Activated CD8-positive, alpha-beta T cell treated with anti-CD3 and anti-CD28 coated beads for 36 hours (primary cell): ENCODE measurements at regions of chr1 and their contacts with region 1.

Region 1: DNA sequence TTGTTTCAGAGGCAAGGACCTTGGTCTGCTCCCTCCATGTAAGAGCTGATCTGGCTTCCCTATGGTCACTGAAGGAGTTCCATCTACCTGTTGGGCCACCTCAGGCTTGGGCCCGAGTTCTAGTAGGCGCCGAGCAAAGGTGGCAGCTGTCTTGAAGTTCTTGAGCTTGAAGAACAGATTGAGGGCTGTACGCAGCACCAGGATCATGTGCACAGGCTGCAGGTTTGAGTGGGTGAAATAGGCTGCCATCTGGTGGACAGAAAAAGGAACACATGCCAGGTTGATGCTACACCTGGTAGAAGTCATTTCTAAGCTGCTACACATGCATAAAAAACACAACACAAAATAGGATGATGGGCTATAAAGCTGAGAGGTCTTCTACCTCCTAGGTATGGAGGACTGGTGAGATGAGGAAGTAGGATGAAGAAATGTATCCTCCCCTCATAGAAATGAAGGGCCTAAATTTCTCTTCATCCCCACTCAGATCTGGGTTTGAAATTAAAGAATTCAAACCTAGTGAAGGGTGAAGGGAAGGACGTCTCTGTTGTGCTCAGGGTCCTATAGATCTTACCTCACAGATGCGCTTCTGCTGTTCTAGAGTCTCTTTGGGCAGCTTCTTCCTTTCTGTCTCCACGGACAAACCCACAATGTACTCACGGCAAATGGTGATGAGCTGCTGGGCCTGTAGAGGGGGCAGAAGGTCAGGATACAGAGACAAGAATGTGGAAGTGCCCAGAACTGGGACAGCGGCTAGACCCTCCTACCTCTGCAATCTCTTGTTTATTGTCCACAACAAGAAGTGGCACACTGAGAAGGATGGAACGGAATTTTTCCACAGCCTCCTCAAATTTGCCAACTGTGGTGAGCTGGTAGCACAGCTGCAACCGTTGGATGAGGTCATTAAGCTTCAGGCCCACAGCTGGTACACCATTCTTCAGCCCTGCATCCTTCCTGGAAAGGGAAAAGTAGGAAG is 6.6 kb upstream of the PEX19 start:
- DNase-seq: peak; percentile 75
- ATAC-seq: peak; percentile 97
- H3K4me3 Mint-ChIP-seq: no peak overlapping the region
- H3K27ac Mint-ChIP-seq: no peak overlapping the region
- H3K4me1 Mint-ChIP-seq: peaks cover 4% of the 10 kb centered on the region
- H3K27me3 Mint-ChIP-seq: no peaks in the 10 kb centered on the region
- CTCF ChIP-seq: peak; percentile 72

Region 2: GRCh38 chr1:160058087-160058486 is 233.4 kb before region 1 on chr1:
- CTCF ChIA-PET with region 1: no interaction called
- POLR2A ChIA-PET with region 1: no interaction called
- intact Hi-C with region 1: no loop called
- DNase-seq: no peak
- ATAC-seq: no peak
- H3K4me3 Mint-ChIP-seq: no peak overlapping the region
- H3K27ac Mint-ChIP-seq: no peak overlapping the region
- H3K4me1 Mint-ChIP-seq: no peaks in the 10 kb centered on the region
- H3K27me3 Mint-ChIP-seq: peaks cover 15% of the 10 kb centered on the region
- CTCF ChIP-seq: no peak

Region 3: GRCh38 chr1:160085686-160086455 is 205.7 kb before region 1 on chr1:
- CTCF ChIA-PET with region 1: interaction called, 21 read pairs
- POLR2A ChIA-PET with region 1: no interaction called
- intact Hi-C with region 1: no loop called
- DNase-seq: peak; percentile 92
- ATAC-seq: peak; percentile 76
- H3K4me3 Mint-ChIP-seq: no peak overlapping the region
- H3K27ac Mint-ChIP-seq: no peak overlapping the region
- H3K4me1 Mint-ChIP-seq: peaks cover 5% of the 10 kb centered on the region
- H3K27me3 Mint-ChIP-seq: peaks cover 21% of the 10 kb centered on the region
- CTCF ChIP-seq: peak; percentile 91

Region 4: GRCh38 chr1:160179336-160179735 is 112.2 kb before region 1 on chr1:
- CTCF ChIA-PET with region 1: interaction called, 20 read pairs
- POLR2A ChIA-PET with region 1: no interaction called
- intact Hi-C with region 1: no loop called
- DNase-seq: no peak
- ATAC-seq: no peak
- H3K4me3 Mint-ChIP-seq: no peak overlapping the region
- H3K27ac Mint-ChIP-seq: no peak overlapping the region
- H3K4me1 Mint-ChIP-seq: no peaks in the 10 kb centered on the region
- H3K27me3 Mint-ChIP-seq: peaks cover 10% of the 10 kb centered on the region
- CTCF ChIP-seq: no peak

Region 5: DNA sequence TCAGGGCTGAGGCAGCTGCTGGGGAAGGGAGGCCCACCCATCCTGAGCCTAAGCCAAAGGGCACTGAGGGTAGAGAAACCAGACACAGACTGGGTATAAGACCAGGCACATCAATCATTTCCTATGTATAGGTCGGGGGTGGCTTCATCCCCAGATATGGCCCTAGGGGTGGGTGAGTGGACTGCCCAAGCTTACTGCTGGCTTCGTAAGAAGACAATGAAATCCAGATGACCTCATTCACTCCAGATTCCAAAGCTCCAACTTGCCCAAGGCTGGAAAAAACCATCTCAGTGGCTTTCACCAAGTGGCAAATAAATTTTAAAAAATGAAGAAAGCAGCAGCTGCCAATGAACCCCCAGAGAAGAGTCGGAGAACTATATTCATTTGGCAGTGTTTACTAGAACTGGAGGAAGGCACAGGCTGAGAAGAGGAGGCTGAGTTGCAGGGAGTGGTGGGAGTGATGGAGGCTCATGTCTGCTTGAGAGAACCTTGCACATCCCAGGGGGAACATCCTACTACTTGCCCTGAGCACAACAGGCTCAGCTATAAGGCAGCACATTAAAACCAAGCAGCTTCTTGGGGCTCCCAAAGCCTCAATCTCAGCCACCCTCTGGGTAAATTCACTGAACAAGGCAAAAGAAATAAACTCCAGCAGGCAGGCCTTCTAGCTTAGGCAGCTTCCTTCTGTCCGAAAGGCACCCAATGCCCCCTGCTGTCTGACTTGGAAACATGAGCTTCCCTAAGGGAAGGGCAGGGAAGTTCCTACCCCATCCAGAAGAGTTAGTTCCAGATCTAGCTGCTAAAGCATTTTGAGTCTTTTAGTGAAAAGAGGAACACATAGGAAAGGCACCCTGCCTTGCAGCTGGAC is 72.2 kb before region 1 on chr1:
- CTCF ChIA-PET with region 1: interaction called, 20 read pairs
- POLR2A ChIA-PET with region 1: no interaction called
- intact Hi-C with region 1: no loop called
- DNase-seq: no peak
- ATAC-seq: no peak
- H3K4me3 Mint-ChIP-seq: no peak overlapping the region
- H3K27ac Mint-ChIP-seq: no peak overlapping the region
- H3K4me1 Mint-ChIP-seq: no peaks in the 10 kb centered on the region
- H3K27me3 Mint-ChIP-seq: no peaks in the 10 kb centered on the region
- CTCF ChIP-seq: no peak

Region 6: GRCh38 chr1:160251687-160252526 is 39.6 kb before region 1 on chr1:
- CTCF ChIA-PET with region 1: interaction called, 53 read pairs
- POLR2A ChIA-PET with region 1: no interaction called
- intact Hi-C with region 1: no loop called
- DNase-seq: peak; percentile 69
- ATAC-seq: peak; percentile 97
- H3K4me3 Mint-ChIP-seq: no peak overlapping the region
- H3K27ac Mint-ChIP-seq: peak overlapping the region; percentile 14
- H3K4me1 Mint-ChIP-seq: peaks cover 16% of the 10 kb centered on the region
- H3K27me3 Mint-ChIP-seq: no peaks in the 10 kb centered on the region
- CTCF ChIP-seq: peak; percentile 69

Region 7: GRCh38 chr1:160307118-160307854 is 15.8 kb after region 1 on chr1:
- CTCF ChIA-PET with region 1: interaction called, 51 read pairs
- POLR2A ChIA-PET with region 1: interaction called, 4 read pairs
- intact Hi-C with region 1: no loop called
- DNase-seq: no peak
- ATAC-seq: no peak
- H3K4me3 Mint-ChIP-seq: no peak overlapping the region
- H3K27ac Mint-ChIP-seq: no peak overlapping the region
- H3K4me1 Mint-ChIP-seq: no peaks in the 10 kb centered on the region
- H3K27me3 Mint-ChIP-seq: no peaks in the 10 kb centered on the region
- CTCF ChIP-seq: no peak

Region 8: GRCh38 chr1:160338580-160338979 is 47.0 kb after region 1 on chr1:
- CTCF ChIA-PET with region 1: interaction called, 26 read pairs
- POLR2A ChIA-PET with region 1: interaction called, 3 read pairs
- intact Hi-C with region 1: no loop called
- DNase-seq: no peak
- ATAC-seq: no peak
- H3K4me3 Mint-ChIP-seq: no peak overlapping the region
- H3K27ac Mint-ChIP-seq: no peak overlapping the region
- H3K4me1 Mint-ChIP-seq: peaks cover 33% of the 10 kb centered on the region
- H3K27me3 Mint-ChIP-seq: no peaks in the 10 kb centered on the region
- CTCF ChIP-seq: no peak